ENCODE measurements at regions of chr17 and their contacts with region 1.

Region 1: GRCh38 chr17:7745748-7746470 is 28.4 kb downstream of the DNAH2 start:
- H3K4me3 Mint-ChIP-seq: no peak overlapping the region
- H3K27ac Mint-ChIP-seq: no peak overlapping the region
- H3K4me1 Mint-ChIP-seq: no peaks in the 10 kb centered on the region
- H3K27me3 Mint-ChIP-seq: peaks cover 3% of the 10 kb centered on the region

Region 2: DNA sequence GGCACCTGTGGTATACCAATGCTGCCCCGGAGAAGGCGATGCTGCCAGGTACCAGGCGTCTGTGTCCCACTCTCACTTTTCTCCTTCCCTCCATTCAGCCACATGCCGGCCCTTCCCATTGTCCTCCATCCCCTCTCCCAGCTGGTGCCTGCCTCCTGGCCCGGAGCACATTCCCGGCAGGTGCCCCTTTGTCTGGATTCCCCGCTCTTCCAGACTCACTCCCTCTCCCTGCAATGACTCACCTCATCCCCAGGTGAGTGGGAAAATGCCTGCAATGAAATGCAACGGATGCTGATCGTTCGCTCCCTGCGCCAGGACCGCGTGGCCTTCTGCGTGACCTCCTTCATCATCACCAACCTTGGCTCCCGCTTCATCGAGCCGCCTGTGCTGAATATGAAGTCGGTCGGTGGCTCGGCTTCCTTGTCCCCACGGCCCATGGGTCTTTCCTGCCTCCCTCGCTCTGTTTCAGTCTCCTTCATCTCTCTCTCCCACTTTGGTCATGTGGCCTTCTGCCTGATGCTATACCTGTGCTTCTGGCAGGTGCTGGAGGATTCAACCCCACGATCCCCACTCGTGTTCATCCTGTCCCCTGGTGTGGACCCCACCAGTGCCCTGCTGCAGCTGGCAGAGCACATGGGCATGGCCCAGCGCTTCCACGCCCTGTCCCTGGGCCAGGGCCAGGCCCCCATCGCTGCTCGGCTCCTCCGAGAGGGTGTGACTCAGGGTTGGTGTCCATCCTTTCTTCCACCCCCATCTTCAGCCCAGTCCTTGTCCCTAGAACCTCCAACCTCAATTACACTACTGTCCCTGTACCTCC is 77.9 kb after region 1 on chr17:
- intact Hi-C with region 1: loop called (anchors 10 kb)
- H3K4me3 Mint-ChIP-seq: no peak overlapping the region
- H3K27ac Mint-ChIP-seq: no peak overlapping the region
- H3K4me1 Mint-ChIP-seq: peaks cover 10% of the 10 kb centered on the region
- H3K27me3 Mint-ChIP-seq: peaks cover 29% of the 10 kb centered on the region

Measured in dendritic cell treated with granulocyte-macrophage colony-stimulating factor and Interleukin-4, amounts not matched to agents 40 ng/mL and 50 ng/mL, for 4 days (primary cell).